ENCODE measurements at regions of chr5 and their contacts with region 1.

Region 1: DNA sequence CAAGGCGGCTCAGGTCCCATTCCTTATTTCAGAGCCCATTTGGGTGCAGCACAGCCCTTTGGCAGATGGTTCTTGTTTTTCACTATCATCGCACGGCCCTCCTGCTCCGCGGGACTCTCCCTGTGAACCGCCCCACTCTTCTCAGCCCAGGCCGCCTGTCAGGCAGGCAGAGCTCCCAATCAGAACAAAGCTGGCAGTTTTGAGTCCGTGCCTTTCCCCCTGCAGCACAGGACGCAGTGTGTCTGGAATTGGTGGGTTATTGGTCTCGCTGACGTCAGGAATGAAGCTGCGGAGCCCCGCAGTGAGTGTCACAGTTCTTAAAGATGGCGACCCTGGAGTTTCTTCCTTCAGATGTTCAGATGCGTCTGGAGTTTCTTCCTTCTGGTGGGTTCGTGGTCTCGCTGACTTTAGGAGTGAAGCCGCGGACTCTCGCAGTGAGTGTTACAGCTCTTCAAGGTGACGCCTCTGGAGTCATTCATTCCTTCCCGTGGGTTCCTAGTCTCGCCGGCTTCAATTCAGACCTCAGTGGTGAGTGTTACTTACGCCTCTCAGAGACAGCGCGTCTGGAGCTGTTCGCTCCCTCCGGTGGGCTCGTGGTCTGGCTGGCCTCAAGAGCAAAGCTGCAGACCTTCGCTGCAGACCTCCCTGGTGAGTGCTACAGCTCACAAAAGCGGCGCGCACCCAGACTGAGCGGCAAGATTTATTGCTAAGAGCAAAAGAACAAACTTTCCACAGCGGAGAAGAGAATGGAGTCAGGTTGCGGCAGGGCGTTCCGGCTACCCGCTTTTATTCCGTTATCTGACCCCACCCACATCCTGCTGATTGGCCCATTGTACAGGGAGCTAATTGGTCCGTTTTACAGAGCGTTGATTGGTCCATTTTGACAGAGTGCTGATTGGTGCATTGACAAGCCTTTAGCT is 7.5 kb downstream of the ZDHHC11B start:
- DNase-seq: peak in 1 of 2 experiments; percentile 15
- H3K4me3 ChIP-seq: no peak overlapping the region
- H3K4me1 ChIP-seq: no peaks in the 10 kb centered on the region
- H3K27me3 ChIP-seq: no peaks in the 10 kb centered on the region

Region 2: GRCh38 chr5:683551-684481 is 93.2 kb before region 1 on chr5:
- in situ Hi-C with region 1: loop called (anchors 5 kb)
- DNase-seq: no peak
- H3K4me3 ChIP-seq: no peak overlapping the region
- H3K4me1 ChIP-seq: no peaks in the 10 kb centered on the region
- H3K27me3 ChIP-seq: no peaks in the 10 kb centered on the region

Region 3: GRCh38 chr5:1208743-1209506 is 431.9 kb after region 1 on chr5:
- in situ Hi-C with region 1: no loop called
- DNase-seq: no peak
- H3K4me3 ChIP-seq: no peak overlapping the region
- H3K4me1 ChIP-seq: no peaks in the 10 kb centered on the region
- H3K27me3 ChIP-seq: peaks cover 30% of the 10 kb centered on the region

Measured in HAP-1 (cell line).